Endothelial cell of umbilical vein (primary cell): ENCODE measurements at regions of chr14 and their contacts with region 1.

Region 1: GRCh38 chr14:55665067-55665675 is 85.2 kb downstream of the KTN1 start:
- DNase-seq: no peak
- H3K4me3 ChIP-seq: no peak overlapping the region
- H3K27ac ChIP-seq: no peak overlapping the region
- H3K4me1 ChIP-seq: no peaks in the 10 kb centered on the region
- H3K27me3 ChIP-seq: no peaks in the 10 kb centered on the region
- CTCF ChIP-seq: no peak
- POLR2A ChIP-seq: no peak

Region 2: GRCh38 chr14:55684956-55685584 is 19.9 kb after region 1 on chr14:
- CTCF ChIA-PET with region 1: interaction called, 12 read pairs
- POLR2A ChIA-PET with region 1: no interaction called
- dilution Hi-C with region 1: no loop called
- intact Hi-C with region 1: no loop called
- DNase-seq: no peak
- H3K4me3 ChIP-seq: no peak overlapping the region
- H3K27ac ChIP-seq: no peak overlapping the region
- H3K4me1 ChIP-seq: peaks cover 10% of the 10 kb centered on the region
- H3K27me3 ChIP-seq: no peaks in the 10 kb centered on the region
- CTCF ChIP-seq: no peak
- POLR2A ChIP-seq: no peak